ENCODE measurements at regions of chr3 and their contacts with region 1.

Region 1: DNA sequence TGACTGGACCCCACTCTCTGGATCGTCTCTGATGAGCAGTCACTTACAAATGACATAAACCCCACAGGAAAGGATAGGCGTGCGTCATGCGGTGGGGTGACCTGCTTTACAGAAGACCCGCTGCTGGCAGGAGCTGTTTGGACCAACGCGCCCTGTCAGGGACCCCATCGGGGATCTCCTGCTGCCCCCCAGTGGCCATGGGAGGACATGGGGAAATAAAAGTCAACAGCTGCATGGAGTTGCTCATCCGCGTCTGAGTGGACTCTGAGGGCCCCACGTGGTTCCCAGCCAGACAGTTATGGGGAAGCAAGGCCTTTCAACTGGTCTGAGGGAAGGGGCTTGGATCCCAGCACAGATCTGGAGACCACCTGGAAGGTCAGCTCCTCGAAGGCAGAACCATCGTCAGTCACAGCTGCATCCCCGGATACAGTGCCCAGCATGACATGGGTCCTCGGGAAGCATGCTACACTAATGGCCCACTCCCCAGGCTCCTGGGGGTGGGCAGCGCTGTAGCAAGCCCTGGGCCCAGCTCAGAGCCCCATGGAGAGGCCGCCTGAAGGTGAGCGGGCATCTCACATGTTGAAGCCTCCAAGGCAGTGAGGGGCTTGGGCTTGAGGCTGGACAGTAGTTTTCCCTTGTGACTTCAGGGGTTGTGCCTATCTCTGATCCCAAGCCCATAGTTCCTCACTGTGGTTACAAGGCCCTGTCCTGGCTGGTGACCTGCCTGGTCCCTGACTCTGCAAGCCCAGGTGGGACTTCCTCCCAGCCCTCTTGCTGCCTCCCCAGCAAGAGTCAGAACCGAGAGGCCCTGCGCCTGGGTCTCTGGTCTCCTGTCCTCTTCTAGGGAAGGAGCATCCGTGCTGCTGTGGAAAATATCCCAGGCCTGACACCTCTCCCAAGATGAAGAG is 32.3 kb downstream of the PTH1R start:
- DNase-seq: no peak
- H3K4me3 ChIP-seq: peak overlapping the region in 1 of 4 donors; percentile 34
- H3K27ac ChIP-seq: no peak overlapping the region
- H3K4me1 ChIP-seq: peaks cover 27 to 35% (median 33%) of the 10 kb centered on the region in 4 donors
- H3K27me3 ChIP-seq: peaks cover 0 to 8% (median 0%) of the 10 kb centered on the region in 4 donors
- CTCF ChIP-seq: peak; percentile 75 to 89 (median 86)
- EP300 ChIP-seq: no peak
- POLR2A ChIP-seq: no peak

Region 2: GRCh38 chr3:46866720-46867549 is 42.9 kb before region 1 on chr3:
- intact Hi-C with region 1: loop called (anchors 5 kb)
- DNase-seq: peak; percentile 96
- H3K4me3 ChIP-seq: peak overlapping the region in 1 of 4 donors; percentile 1
- H3K27ac ChIP-seq: peak overlapping the region; percentile 55 to 70 (median 66)
- H3K4me1 ChIP-seq: peaks cover 24 to 41% (median 30%) of the 10 kb centered on the region in 4 donors
- H3K27me3 ChIP-seq: no peaks in the 10 kb centered on the region
- CTCF ChIP-seq: peak; percentile 90 to 95 (median 93)
- EP300 ChIP-seq: no peak
- POLR2A ChIP-seq: no peak